AG04449 (cell line): ENCODE measurements at regions of chr5 and their contacts with region 1.

Region 1: GRCh38 chr5:98768160-98769005 is 5.1 kb upstream of the RGMB start:
- DNase-seq: no peak
- H3K4me3 ChIP-seq: peak overlapping the region; percentile 86
- CTCF ChIP-seq: peak; percentile 91

Region 2: GRCh38 chr5:98341038-98342032 is 427.0 kb before region 1 on chr5:
- CTCF ChIA-PET with region 1: interaction called, 13 read pairs
- POLR2A ChIA-PET with region 1: interaction called, 3 read pairs
- DNase-seq: peak; percentile 92
- H3K4me3 ChIP-seq: no peak overlapping the region
- CTCF ChIP-seq: no peak

Region 3: GRCh38 chr5:98365126-98365525 is 403.3 kb before region 1 on chr5:
- CTCF ChIA-PET with region 1: interaction called, 12 read pairs
- POLR2A ChIA-PET with region 1: no interaction called
- DNase-seq: no peak
- H3K4me3 ChIP-seq: no peak overlapping the region
- CTCF ChIP-seq: no peak

Region 4: GRCh38 chr5:98414938-98415337 is 353.4 kb before region 1 on chr5:
- CTCF ChIA-PET with region 1: interaction called, 80 read pairs
- POLR2A ChIA-PET with region 1: interaction called, 14 read pairs
- DNase-seq: peak; percentile 98
- H3K4me3 ChIP-seq: no peak overlapping the region
- CTCF ChIP-seq: no peak

Region 5: DNA sequence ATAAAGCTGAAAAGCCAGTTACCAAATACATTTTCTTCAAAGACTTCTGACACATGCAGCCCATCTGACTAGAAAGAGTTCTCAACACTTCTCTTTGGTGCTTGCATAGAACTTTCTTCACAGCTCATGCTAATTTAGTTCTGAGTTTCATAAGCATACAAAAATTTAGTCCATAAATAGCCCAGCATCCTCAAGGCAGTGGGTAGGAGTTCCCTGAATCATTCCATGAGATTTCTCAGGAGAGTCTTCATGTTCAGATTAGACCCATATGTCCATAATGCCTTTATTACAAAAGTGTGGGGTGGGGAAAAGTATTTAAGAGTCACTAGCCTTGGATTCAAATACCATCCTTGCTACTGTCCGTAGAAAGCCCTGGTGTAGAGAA is 285.1 kb before region 1 on chr5:
- CTCF ChIA-PET with region 1: interaction called, 11 read pairs
- POLR2A ChIA-PET with region 1: no interaction called
- DNase-seq: peak; percentile 82
- H3K4me3 ChIP-seq: no peak overlapping the region
- CTCF ChIP-seq: no peak

Region 6: DNA sequence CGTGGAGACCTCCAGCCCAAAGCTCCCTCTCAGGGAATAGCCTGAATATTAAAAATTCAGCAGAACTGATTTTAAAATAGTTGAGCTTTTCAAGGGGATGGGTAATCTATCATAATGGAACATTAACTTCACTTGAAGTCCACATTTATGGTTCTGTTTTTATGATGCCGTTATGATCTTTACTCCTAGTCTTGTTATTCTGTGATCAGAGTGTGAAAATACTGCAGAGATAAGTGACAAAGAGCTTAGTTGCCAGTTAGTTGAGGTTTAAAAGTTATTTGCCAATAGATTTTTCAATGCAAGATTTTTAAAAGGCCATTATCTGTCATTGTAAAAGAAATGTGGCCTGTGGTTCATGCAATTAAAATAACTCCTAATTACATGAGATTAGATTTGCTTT is 184.8 kb before region 1 on chr5:
- CTCF ChIA-PET with region 1: no interaction called
- POLR2A ChIA-PET with region 1: no interaction called
- DNase-seq: no peak
- H3K4me3 ChIP-seq: no peak overlapping the region
- CTCF ChIP-seq: no peak

Region 7: DNA sequence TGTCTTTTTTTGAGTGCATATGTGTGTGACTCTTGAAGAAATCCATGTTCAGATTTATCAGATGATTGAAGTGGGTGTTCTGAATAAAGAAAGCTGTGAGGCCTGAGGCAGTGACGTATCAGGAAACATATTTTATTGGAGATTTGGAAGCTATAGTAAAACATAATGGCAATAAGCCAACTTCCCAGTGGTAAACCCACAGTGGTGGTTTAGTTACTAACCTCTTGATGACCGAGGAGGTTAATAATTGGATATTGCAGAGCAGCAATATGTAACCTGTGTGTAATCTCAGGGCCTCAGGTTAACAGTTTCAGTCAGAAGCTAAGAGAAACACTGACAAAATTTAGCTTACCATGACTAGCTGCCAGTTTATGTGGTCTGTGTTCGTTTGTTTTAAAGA is 12.0 kb after region 1 on chr5:
- CTCF ChIA-PET with region 1: interaction called, 42 read pairs
- POLR2A ChIA-PET with region 1: interaction called, 3 read pairs
- DNase-seq: no peak
- H3K4me3 ChIP-seq: no peak overlapping the region
- CTCF ChIP-seq: no peak